T-cell (primary cell): ENCODE measurements at regions of chr5 and their contacts with region 1.

Region 1: DNA sequence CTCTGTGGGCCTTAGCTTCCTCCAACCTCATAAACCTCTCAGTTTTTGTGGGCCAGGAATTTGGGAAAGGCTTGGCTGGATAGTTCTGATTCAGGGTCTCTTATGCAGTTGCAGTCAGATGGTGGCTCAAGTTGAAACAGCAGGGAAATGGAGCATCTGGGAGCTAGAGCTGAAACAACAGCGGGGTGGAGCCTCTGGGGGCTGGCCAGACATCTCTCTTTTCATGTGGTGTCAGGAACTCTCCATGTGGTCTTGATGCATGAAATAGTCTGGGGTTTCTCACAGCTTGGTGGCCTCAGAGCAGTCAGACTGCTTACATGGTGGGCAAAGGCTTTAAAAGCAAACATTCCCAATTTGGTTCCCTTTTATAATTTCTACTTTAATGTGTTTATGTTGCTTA is 13.5 kb downstream of the ZNF346 start:
- DNase-seq: no peak
- ATAC-seq: no peak
- H3K4me3 ChIP-seq: no peak overlapping the region
- H3K4me3 Mint-ChIP-seq: no peak overlapping the region
- H3K27ac ChIP-seq: no peak overlapping the region
- H3K27ac Mint-ChIP-seq: no peak overlapping the region
- H3K4me1 ChIP-seq: peaks cover 0 to 5% of the 10 kb centered on the region in 2 experiments
- H3K4me1 Mint-ChIP-seq: peaks cover 19 to 30% (median 23%) of the 10 kb centered on the region in 3 donors
- H3K27me3 ChIP-seq: no peaks in the 10 kb centered on the region
- H3K27me3 Mint-ChIP-seq: no peaks in the 10 kb centered on the region

Region 2: GRCh38 chr5:176955895-176956294 is 80.1 kb before region 1 on chr5:
- CTCF ChIA-PET with region 1: no interaction called
- POLR2A ChIA-PET with region 1: interaction called in 1 of 2 experiments, 10 read pairs
- DNase-seq: no peak
- ATAC-seq: no peak
- H3K4me3 ChIP-seq: no peak overlapping the region
- H3K4me3 Mint-ChIP-seq: no peak overlapping the region
- H3K27ac ChIP-seq: no peak overlapping the region
- H3K27ac Mint-ChIP-seq: no peak overlapping the region
- H3K4me1 ChIP-seq: no peaks in the 10 kb centered on the region
- H3K4me1 Mint-ChIP-seq: peaks cover 2 to 11% (median 8%) of the 10 kb centered on the region in 3 donors
- H3K27me3 ChIP-seq: no peaks in the 10 kb centered on the region
- H3K27me3 Mint-ChIP-seq: no peaks in the 10 kb centered on the region